Caco-2 (cell line): ENCODE measurements at regions of chr5 and their contacts with region 1.

Region 1: GRCh38 chr5:160312134-160312959 is at the start of gene CCNJL:
- DNase-seq: peak; percentile 79 to 86
- H3K4me3 ChIP-seq: peak within 1 kb of the TSS; percentile 63
- H3K4me3 Mint-ChIP-seq: peak within 1 kb of the TSS; percentile 92
- H3K27ac Mint-ChIP-seq: peak within 1 kb of the TSS; percentile 92
- H3K4me1 ChIP-seq: peaks cover 34% of the 10 kb centered on the region
- H3K4me1 Mint-ChIP-seq: peaks cover 50% of the 10 kb centered on the region
- H3K27me3 ChIP-seq: no peaks in the 10 kb centered on the region
- H3K27me3 Mint-ChIP-seq: no peaks in the 10 kb centered on the region
- CTCF ChIP-seq: no peak
- total RNA-seq, gene CCNJL: 16.5 and 17.4 TPM in 2 replicates

Region 2: GRCh38 chr5:160287378-160288051 is 24.8 kb before region 1 on chr5:
- CTCF ChIA-PET with region 1: no interaction called
- POLR2A ChIA-PET with region 1: no interaction called
- intact Hi-C with region 1: loop called (anchors 2 kb)
- DNase-seq: peak; percentile 79 to 89
- H3K4me3 ChIP-seq: no peak overlapping the region
- H3K4me3 Mint-ChIP-seq: peak overlapping the region; percentile 29
- H3K27ac Mint-ChIP-seq: peak overlapping the region; percentile 94
- H3K4me1 ChIP-seq: peaks cover 35% of the 10 kb centered on the region
- H3K4me1 Mint-ChIP-seq: peaks cover 19% of the 10 kb centered on the region
- H3K27me3 ChIP-seq: no peaks in the 10 kb centered on the region
- H3K27me3 Mint-ChIP-seq: no peaks in the 10 kb centered on the region
- CTCF ChIP-seq: no peak

Region 3: GRCh38 chr5:160333721-160334120 is 21.4 kb after region 1 on chr5:
- CTCF ChIA-PET with region 1: no interaction called
- POLR2A ChIA-PET with region 1: no interaction called
- intact Hi-C with region 1: no loop called
- DNase-seq: no peak
- H3K4me3 ChIP-seq: no peak overlapping the region
- H3K4me3 Mint-ChIP-seq: no peak overlapping the region
- H3K27ac Mint-ChIP-seq: no peak overlapping the region
- H3K4me1 ChIP-seq: no peaks in the 10 kb centered on the region
- H3K4me1 Mint-ChIP-seq: no peaks in the 10 kb centered on the region
- H3K27me3 ChIP-seq: no peaks in the 10 kb centered on the region
- H3K27me3 Mint-ChIP-seq: no peaks in the 10 kb centered on the region
- CTCF ChIP-seq: no peak